Pancreas (tissue), 10 donors: ENCODE measurements at regions of chr17 and their contacts with region 1.

Region 1: GRCh38 chr17:46212634-46213435 is 19.6 kb upstream of the KANSL1 start:
- DNase-seq: peak in 3 of 6 donors; percentile 71 to 82 (median 74)
- ATAC-seq: peak; percentile 83 to 96 (median 93)
- H3K4me3 ChIP-seq: no peak overlapping the region
- H3K27ac ChIP-seq: peak overlapping the region in 2 of 4 donors; percentile 39 to 42
- H3K4me1 ChIP-seq: peaks cover 0 to 4% (median 0%) of the 10 kb centered on the region in 3 donors
- H3K27me3 ChIP-seq: no peaks in the 10 kb centered on the region
- CTCF ChIP-seq: peak; percentile 52 to 82 (median 74)

Region 2: DNA sequence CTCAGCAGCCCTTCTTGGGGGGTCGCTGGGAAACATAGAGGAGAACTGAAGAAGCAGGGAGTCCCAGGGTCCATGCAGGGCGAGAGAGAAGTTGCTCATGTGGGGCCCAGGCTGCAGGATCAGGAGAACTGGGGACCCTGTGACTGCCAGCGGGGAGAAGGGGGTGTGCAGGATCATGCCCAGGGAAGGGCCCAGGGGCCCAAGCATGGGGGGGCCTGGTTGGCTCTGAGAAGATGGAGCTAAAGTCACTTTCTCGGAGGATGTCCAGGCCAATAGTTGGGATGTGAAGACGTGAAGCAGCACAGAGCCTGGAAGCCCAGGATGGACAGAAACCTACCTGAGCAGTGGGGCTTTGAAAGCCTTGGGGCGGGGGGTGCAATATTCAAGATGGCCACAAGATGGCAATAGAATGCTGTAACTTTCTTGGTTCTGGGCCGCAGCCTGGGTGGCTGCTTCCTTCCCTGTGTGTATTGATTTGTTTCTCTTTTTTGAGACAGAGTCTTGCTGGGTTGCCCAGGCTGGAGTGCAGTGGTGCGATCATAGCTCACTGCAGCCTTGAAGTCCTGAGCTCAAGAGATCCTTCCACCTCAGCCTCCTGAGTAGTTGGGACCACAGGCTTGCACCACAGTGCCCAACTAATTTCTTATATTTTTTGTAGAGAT is 210.4 kb before region 1 on chr17:
- intact Hi-C with region 1: loop called in 2 of 3 experiments (anchors 5 kb)
- DNase-seq: peak; percentile 68 to 88 (median 78)
- ATAC-seq: peak; percentile 65 to 84 (median 74)
- H3K4me3 ChIP-seq: no peak overlapping the region
- H3K27ac ChIP-seq: peak overlapping the region in 1 of 4 donors; percentile 80
- H3K4me1 ChIP-seq: peaks cover 12 to 21% (median 15%) of the 10 kb centered on the region in 3 donors
- H3K27me3 ChIP-seq: no peaks in the 10 kb centered on the region
- CTCF ChIP-seq: peak; percentile 93 to 97 (median 95)

Region 3: GRCh38 chr17:46139432-46140210 is 73.2 kb before region 1 on chr17:
- intact Hi-C with region 1: no loop called
- DNase-seq: no peak
- ATAC-seq: peak in 3 of 4 donors; percentile 34 to 48 (median 43)
- H3K4me3 ChIP-seq: no peak overlapping the region
- H3K27ac ChIP-seq: peak overlapping the region in 2 of 4 donors; percentile 1 to 24
- H3K4me1 ChIP-seq: peaks cover 14 to 71% (median 31%) of the 10 kb centered on the region in 3 donors
- H3K27me3 ChIP-seq: no peaks in the 10 kb centered on the region
- CTCF ChIP-seq: no peak

Region 4: DNA sequence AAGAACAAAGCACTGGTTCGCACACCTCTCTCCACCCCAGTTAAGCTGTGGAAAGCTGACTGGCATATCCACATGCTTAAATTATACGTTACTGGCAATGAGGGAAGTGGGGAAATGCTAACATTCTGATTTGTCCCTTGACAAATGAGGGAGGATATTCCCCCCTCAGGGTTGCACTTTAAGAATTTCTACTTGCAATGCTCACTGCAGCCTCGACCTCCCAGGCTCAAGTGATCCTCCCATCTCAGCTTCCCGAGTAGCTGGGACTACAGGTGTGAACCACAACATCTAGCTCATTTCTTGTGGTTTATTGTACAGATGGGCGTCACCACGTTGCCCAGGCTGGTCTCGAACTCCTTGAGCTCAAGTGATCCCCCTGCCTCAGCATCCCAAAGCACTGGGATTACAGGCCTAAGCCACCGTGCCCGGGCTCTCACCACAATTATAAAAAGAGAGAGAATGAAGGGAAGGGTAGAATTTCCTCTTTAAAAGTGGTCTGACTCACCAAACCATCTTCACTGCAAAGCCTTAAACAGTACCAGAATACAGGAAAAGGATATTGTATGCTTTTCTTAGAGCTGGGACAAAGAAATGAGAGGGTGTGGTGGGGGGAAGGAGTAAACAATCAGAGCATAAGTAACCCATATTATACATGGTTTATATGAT is 58.6 kb before region 1 on chr17:
- intact Hi-C with region 1: no loop called
- DNase-seq: no peak
- ATAC-seq: peak in 2 of 4 donors; percentile 1 to 2
- H3K4me3 ChIP-seq: no peak overlapping the region
- H3K27ac ChIP-seq: no peak overlapping the region
- H3K4me1 ChIP-seq: peaks cover 39 to 82% (median 76%) of the 10 kb centered on the region in 3 donors
- H3K27me3 ChIP-seq: no peaks in the 10 kb centered on the region
- CTCF ChIP-seq: no peak

Region 5: DNA sequence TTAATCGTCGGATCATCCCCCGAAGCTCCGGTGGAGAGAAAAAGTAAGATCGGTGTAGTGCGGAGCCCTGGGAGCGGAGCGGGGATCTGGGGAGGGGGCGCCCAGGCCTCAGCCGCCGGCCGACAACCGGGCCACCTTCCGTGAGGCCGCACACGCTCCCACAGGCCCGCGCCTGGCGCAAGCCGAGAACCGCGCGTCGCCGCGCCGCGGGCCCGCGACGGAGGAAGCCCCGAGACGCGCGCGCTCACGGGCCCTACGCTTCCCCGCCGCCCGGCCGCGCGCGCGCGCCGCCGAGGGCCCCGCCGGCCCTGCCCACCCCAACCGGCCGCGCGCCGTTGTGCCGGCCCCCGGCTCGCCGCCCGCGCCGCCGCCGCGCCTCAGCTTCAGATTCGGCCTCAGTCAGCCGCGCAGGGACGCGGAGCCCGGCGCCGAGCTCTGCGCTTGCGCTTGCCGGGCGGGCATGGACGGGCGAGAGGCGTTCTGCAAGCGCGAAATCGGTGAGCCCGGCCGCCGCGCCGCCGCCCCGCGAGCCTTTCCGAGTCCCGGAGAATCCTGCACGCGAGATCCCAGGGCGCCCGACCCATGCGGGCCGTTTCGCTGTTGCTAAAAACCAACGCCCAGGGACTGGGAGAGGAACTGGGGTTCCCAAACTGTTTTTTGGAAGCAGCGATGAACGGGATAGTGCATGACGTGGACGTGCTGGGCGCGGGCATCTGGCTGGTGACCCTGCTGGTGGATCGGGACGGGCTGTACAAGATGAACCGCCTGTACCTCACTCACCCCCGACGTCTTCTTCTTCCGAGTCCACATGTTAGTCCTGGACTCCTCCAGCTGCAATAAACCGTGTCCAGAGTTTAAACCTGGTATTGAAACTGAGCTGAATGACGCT is 54.1 kb after region 1 on chr17:
- intact Hi-C with region 1: no loop called
- DNase-seq: peak; percentile 77 to 97 (median 90)
- ATAC-seq: peak; percentile 86 to 94 (median 92)
- H3K4me3 ChIP-seq: peak overlapping the region; percentile 56 to 83 (median 78)
- H3K27ac ChIP-seq: peak overlapping the region; percentile 74 to 91 (median 88)
- H3K4me1 ChIP-seq: peaks cover 5 to 13% (median 6%) of the 10 kb centered on the region in 3 donors
- H3K27me3 ChIP-seq: no peaks in the 10 kb centered on the region
- CTCF ChIP-seq: no peak